PC-3 (cell line): ENCODE measurements at regions of chr2 and their contacts with region 1.

Region 1: DNA sequence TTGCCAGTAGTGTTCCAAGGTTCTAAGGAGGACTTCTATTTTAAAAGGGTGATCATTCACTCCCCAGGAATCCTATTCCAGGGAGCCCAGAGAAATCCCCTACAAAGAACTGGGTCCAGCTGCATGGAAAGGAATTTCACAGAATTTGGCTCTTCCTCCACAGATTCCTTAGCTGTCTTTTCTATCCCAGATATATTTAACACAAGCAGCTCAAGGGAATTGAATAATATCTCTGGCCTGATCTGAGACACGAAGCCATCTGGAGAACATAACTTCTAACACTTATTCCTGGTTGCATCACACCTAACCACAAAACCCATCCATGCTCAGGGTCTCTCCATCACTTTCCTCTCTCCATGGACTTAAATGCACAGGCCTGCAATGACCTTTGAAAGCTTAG is 306.7 kb upstream of the ACVR2A start:
- DNase-seq: no peak
- ATAC-seq: no peak
- H3K4me3 ChIP-seq: no peak overlapping the region
- H3K27ac ChIP-seq: no peak overlapping the region
- H3K4me1 ChIP-seq: no peaks in the 10 kb centered on the region
- H3K27me3 ChIP-seq: no peaks in the 10 kb centered on the region
- CTCF ChIP-seq: no peak

Region 2: GRCh38 chr2:147560810-147561535 is 22.9 kb after region 1 on chr2:
- CTCF ChIA-PET with region 1: no interaction called
- POLR2A ChIA-PET with region 1: interaction called, 16 read pairs
- intact Hi-C with region 1: no loop called
- DNase-seq: no peak
- ATAC-seq: no peak
- H3K4me3 ChIP-seq: no peak overlapping the region
- H3K27ac ChIP-seq: no peak overlapping the region
- H3K4me1 ChIP-seq: no peaks in the 10 kb centered on the region
- H3K27me3 ChIP-seq: no peaks in the 10 kb centered on the region
- CTCF ChIP-seq: no peak

Region 3: GRCh38 chr2:147818741-147819140 is 280.7 kb after region 1 on chr2:
- CTCF ChIA-PET with region 1: no interaction called
- POLR2A ChIA-PET with region 1: no interaction called
- intact Hi-C with region 1: no loop called
- DNase-seq: no peak
- ATAC-seq: no peak
- H3K4me3 ChIP-seq: no peak overlapping the region
- H3K27ac ChIP-seq: no peak overlapping the region
- H3K4me1 ChIP-seq: 0 out of 2 replicates have a peak, but pooled peaks cover 5% of the 10 kb centered on the region
- H3K27me3 ChIP-seq: no peaks in the 10 kb centered on the region
- CTCF ChIP-seq: no peak